ENCODE measurements at regions of chr22 and their contacts with region 1.

Region 1: DNA sequence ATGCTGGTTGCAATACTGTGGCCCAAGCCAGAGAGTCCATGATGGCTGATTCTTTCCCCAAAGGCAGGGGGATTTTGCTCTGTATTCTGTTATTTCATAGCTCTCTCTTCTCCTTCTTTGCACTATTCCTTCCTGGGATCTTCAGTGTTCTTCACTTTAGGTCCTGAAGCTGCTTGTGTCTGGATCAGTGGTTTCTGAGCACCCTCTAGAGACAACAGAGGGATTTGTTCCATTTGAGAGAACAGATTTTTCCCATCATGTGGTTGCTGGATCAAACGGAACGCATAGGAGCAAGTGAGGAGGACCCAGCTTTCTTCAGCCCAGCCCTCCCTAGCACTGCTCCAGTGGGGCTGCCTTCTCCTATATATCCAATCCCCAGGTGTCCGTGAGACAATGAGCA is 68.7 kb upstream of the SYN3 start:
- DNase-seq: peak; percentile 37
- H3K4me3 ChIP-seq: no peak overlapping the region
- H3K27ac ChIP-seq: no peak overlapping the region
- H3K4me1 ChIP-seq: no peaks in the 10 kb centered on the region
- H3K27me3 ChIP-seq: no peaks in the 10 kb centered on the region
- CTCF ChIP-seq: peak; percentile 49 to 67

Region 2: GRCh38 chr22:32836280-32837123 is 290.4 kb before region 1 on chr22:
- CTCF ChIA-PET with region 1: no interaction called
- dilution Hi-C with region 1: no loop called
- in situ Hi-C with region 1: no loop called
- intact Hi-C with region 1: no loop called
- DNase-seq: no peak
- H3K4me3 ChIP-seq: no peak overlapping the region
- H3K27ac ChIP-seq: no peak overlapping the region
- H3K4me1 ChIP-seq: no peaks in the 10 kb centered on the region
- H3K27me3 ChIP-seq: no peaks in the 10 kb centered on the region
- CTCF ChIP-seq: peak; percentile 42 to 48

Region 3: GRCh38 chr22:33018232-33018864 is 108.5 kb before region 1 on chr22:
- CTCF ChIA-PET with region 1: no interaction called
- dilution Hi-C with region 1: no loop called
- in situ Hi-C with region 1: loop called (anchors 5 to 10 kb)
- intact Hi-C with region 1: loop called (anchors 1 kb)
- DNase-seq: no peak
- H3K4me3 ChIP-seq: no peak overlapping the region
- H3K27ac ChIP-seq: no peak overlapping the region
- H3K4me1 ChIP-seq: no peaks in the 10 kb centered on the region
- H3K27me3 ChIP-seq: no peaks in the 10 kb centered on the region
- CTCF ChIP-seq: peak; percentile 93 to 95

Region 4: DNA sequence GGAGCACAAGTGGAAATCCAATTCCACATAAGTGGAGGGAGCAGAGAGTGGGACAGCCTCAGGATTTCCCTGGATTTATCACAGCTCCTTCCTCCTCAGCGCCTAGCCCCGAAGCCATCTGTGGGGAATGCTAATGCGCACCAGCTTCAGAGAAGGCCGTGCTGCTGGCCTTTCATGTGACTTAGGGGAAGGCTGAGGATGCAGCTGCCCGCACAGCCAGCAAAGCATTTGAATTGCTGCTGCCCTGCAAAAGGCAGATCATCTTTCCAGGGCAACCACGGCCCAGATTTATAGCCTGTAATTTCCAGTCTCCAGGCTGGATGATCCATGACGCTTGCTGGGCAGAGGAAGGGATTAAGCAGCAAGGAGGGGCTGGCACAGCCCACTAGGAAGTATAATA is 98.6 kb before region 1 on chr22:
- CTCF ChIA-PET with region 1: no interaction called
- dilution Hi-C with region 1: no loop called
- in situ Hi-C with region 1: loop called in 1 of 2 experiments (anchors 10 kb)
- intact Hi-C with region 1: no loop called
- DNase-seq: no peak
- H3K4me3 ChIP-seq: no peak overlapping the region
- H3K27ac ChIP-seq: no peak overlapping the region
- H3K4me1 ChIP-seq: no peaks in the 10 kb centered on the region
- H3K27me3 ChIP-seq: no peaks in the 10 kb centered on the region
- CTCF ChIP-seq: no peak

Region 5: DNA sequence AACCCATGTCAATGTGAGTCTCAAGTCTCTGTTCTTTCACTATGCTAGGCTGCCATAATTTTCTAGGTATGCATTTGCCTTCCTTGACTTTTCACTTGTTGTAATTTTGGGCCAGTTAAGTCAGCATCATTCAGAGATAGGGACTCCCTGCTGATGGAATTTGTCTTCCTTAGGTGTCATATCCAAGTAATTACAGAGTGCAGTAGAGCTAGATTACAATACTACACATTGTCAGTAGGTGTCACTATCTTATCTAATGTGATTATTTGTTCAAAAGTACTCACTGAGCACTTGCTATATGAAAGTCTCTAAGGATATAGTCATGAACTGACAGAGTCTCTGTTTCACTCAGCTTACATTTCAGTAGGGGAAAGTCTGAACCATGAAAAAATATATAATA is 43.7 kb before region 1 on chr22:
- CTCF ChIA-PET with region 1: no interaction called
- dilution Hi-C with region 1: no loop called
- in situ Hi-C with region 1: no loop called
- intact Hi-C with region 1: loop called (anchors 1 kb)
- DNase-seq: no peak
- H3K4me3 ChIP-seq: no peak overlapping the region
- H3K27ac ChIP-seq: no peak overlapping the region
- H3K4me1 ChIP-seq: no peaks in the 10 kb centered on the region
- H3K27me3 ChIP-seq: no peaks in the 10 kb centered on the region
- CTCF ChIP-seq: peak; percentile 46 to 58